ENCODE measurements at regions of chr19 and their contacts with region 1.

Region 1: GRCh38 chr19:50520822-50521465 is 7.2 kb upstream of the ASPDH start:
- DNase-seq: no peak
- H3K4me3 ChIP-seq: no peak overlapping the region
- H3K27me3 ChIP-seq: no peaks in the 10 kb centered on the region
- CTCF ChIP-seq: no peak

Region 2: GRCh38 chr19:50486823-50487511 is 34.0 kb before region 1 on chr19:
- CTCF ChIA-PET with region 1: no interaction called
- POLR2A ChIA-PET with region 1: no interaction called
- DNase-seq: no peak
- H3K4me3 ChIP-seq: no peak overlapping the region
- H3K27me3 ChIP-seq: peaks cover 16% of the 10 kb centered on the region
- CTCF ChIP-seq: peak; percentile 50

Region 3: GRCh38 chr19:50537762-50538230 is 16.9 kb after region 1 on chr19:
- CTCF ChIA-PET with region 1: interaction called, 16 read pairs
- POLR2A ChIA-PET with region 1: no interaction called
- DNase-seq: peak; percentile 7
- H3K4me3 ChIP-seq: no peak overlapping the region
- H3K27me3 ChIP-seq: no peaks in the 10 kb centered on the region
- CTCF ChIP-seq: peak; percentile 84

Region 4: GRCh38 chr19:50649433-50650391 is 128.8 kb after region 1 on chr19 and contains the start of gene C19orf81:
- CTCF ChIA-PET with region 1: no interaction called
- POLR2A ChIA-PET with region 1: no interaction called
- DNase-seq: no peak
- H3K4me3 ChIP-seq: no peak within 1 kb of the TSS
- H3K27me3 ChIP-seq: peaks cover 1% of the 10 kb centered on the region; the same call in 1 of the 2 replicates
- CTCF ChIP-seq: no peak
- polyA plus RNA-seq, gene C19orf81: 0.47 and 0.59 TPM in 2 replicates